ENCODE measurements at regions of chr4 and their contacts with region 1.

Region 1: GRCh38 chr4:56435306-56435926 is at the start of gene PPAT:
- DNase-seq: peak; percentile 97 to 100 (median 99)
- ATAC-seq: peak; percentile 91
- H3K4me3 ChIP-seq: peak within 1 kb of the TSS; percentile 93
- H3K4me3 Mint-ChIP-seq: peak within 1 kb of the TSS; percentile 81 to 99 (median 94)
- H3K27ac ChIP-seq: peak within 1 kb of the TSS; percentile 59
- H3K27ac Mint-ChIP-seq: peak within 1 kb of the TSS; percentile 78 to 98 (median 91)
- H3K4me1 ChIP-seq: peaks cover 12 to 15% of the 10 kb centered on the region in 2 donors
- H3K4me1 Mint-ChIP-seq: peaks cover 33 to 63% (median 47%) of the 10 kb centered on the region in 7 donors
- H3K27me3 ChIP-seq: no peaks in the 10 kb centered on the region
- H3K27me3 Mint-ChIP-seq: no peaks in the 10 kb centered on the region
- total RNA-seq, gene PPAT: 7.7 to 30.7 (median 15.3) TPM

Region 2: GRCh38 chr4:55853484-55854046 is 581.9 kb before region 1 on chr4 and contains the start of gene EXOC1:
- CTCF ChIA-PET with region 1: no interaction called
- POLR2A ChIA-PET with region 1: interaction called, 4 read pairs
- intact Hi-C with region 1: loop called (anchors 1 kb)
- DNase-seq: peak; percentile 93 to 98 (median 94)
- ATAC-seq: peak; percentile 99
- H3K4me3 ChIP-seq: peak within 1 kb of the TSS; percentile 84
- H3K4me3 Mint-ChIP-seq: peak within 1 kb of the TSS in 2 of 10 donors; percentile 34 to 69
- H3K27ac ChIP-seq: peak within 1 kb of the TSS; percentile 87
- H3K27ac Mint-ChIP-seq: peak within 1 kb of the TSS in 7 of 9 donors; percentile 75 to 94 (median 90)
- H3K4me1 ChIP-seq: peaks cover 26 to 31% of the 10 kb centered on the region in 2 donors
- H3K4me1 Mint-ChIP-seq: peaks cover 22 to 48% (median 42%) of the 10 kb centered on the region in 7 donors
- H3K27me3 ChIP-seq: no peaks in the 10 kb centered on the region
- H3K27me3 Mint-ChIP-seq: no peaks in the 10 kb centered on the region
- total RNA-seq, gene EXOC1: 20.3 to 46.7 (median 32.1) TPM

Region 3: GRCh38 chr4:56445699-56446098 is 10.3 kb after region 1 on chr4:
- CTCF ChIA-PET with region 1: no interaction called
- POLR2A ChIA-PET with region 1: interaction called, 7 read pairs
- intact Hi-C with region 1: loop called in 1 of 2 experiments (anchors 1 kb)
- DNase-seq: no peak
- ATAC-seq: no peak
- H3K4me3 ChIP-seq: no peak overlapping the region
- H3K4me3 Mint-ChIP-seq: no peak overlapping the region
- H3K27ac ChIP-seq: no peak overlapping the region
- H3K27ac Mint-ChIP-seq: no peak overlapping the region
- H3K4me1 ChIP-seq: peaks cover 0 to 3% of the 10 kb centered on the region in 2 donors
- H3K4me1 Mint-ChIP-seq: peaks cover 6 to 47% (median 18%) of the 10 kb centered on the region in 7 donors
- H3K27me3 ChIP-seq: no peaks in the 10 kb centered on the region
- H3K27me3 Mint-ChIP-seq: no peaks in the 10 kb centered on the region

Region 4: DNA sequence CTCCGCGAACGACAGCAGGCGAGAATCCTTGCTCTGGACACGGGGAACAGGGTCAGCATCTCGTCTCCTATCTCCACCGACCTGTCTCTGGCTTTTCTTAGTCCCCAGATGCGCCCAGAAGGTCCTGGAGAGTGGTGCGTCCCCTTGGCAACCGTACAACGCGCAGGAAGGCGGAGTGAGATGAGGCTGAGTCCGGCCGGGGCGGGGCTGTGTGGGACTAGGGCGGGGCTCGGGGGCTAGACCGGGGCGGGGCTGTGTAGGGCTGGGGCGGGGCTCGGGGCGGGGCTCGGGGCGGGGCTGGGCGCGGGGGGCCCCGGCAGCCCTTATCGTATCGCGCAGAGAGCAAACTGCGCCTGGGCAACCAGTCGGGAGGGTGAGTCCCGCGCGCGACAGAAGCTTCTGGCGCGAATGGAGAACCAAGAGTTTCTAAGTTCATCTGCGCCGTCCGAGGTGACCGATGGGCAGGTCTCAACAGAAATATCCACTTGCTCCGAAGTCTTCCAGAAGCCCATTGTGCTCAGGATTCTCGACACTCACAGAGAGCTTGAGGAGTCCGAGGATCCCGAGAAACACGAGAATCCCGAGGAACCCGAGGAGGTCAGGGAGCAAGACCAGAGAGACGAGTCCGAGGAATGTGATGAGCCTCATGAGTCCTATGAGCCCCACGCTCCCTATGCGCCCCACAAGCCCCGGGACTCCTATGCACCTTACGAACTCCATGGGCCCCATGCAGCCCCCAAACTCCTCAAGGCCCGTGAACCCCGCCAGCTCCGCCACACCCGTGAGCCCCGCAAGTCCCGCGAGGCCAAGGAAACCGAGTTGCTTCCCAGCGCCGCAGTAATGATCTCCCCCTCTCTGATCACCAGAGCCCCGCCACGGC is 95.1 kb after region 1 on chr4:
- CTCF ChIA-PET with region 1: no interaction called
- POLR2A ChIA-PET with region 1: interaction called, 6 read pairs
- intact Hi-C with region 1: loop called (anchors 1 kb)
- DNase-seq: peak; percentile 53 to 75 (median 59)
- ATAC-seq: peak; percentile 99
- H3K4me3 ChIP-seq: peak overlapping the region; percentile 91
- H3K4me3 Mint-ChIP-seq: peak overlapping the region in 1 of 10 donors; percentile 70
- H3K27ac ChIP-seq: peak overlapping the region; percentile 44
- H3K27ac Mint-ChIP-seq: peak overlapping the region in 3 of 9 donors; percentile 26 to 55 (median 38)
- H3K4me1 ChIP-seq: peaks cover 0 to 4% of the 10 kb centered on the region in 2 donors
- H3K4me1 Mint-ChIP-seq: peaks cover 0 to 2% (median 0%) of the 10 kb centered on the region in 7 donors
- H3K27me3 ChIP-seq: peaks cover 0 to 4% of the 10 kb centered on the region in 2 donors
- H3K27me3 Mint-ChIP-seq: peaks cover 0 to 22% (median 7%) of the 10 kb centered on the region in 5 donors

Region 5: GRCh38 chr4:56655209-56655626 is 219.8 kb after region 1 on chr4:
- CTCF ChIA-PET with region 1: no interaction called
- POLR2A ChIA-PET with region 1: no interaction called
- intact Hi-C with region 1: no loop called
- DNase-seq: peak in 4 of 9 donors; percentile 14 to 26 (median 22)
- ATAC-seq: peak; percentile 33
- H3K4me3 ChIP-seq: peak overlapping the region; percentile 66
- H3K4me3 Mint-ChIP-seq: peak overlapping the region; percentile 85 to 99 (median 90)
- H3K27ac ChIP-seq: no peak overlapping the region
- H3K27ac Mint-ChIP-seq: peak overlapping the region in 7 of 9 donors; percentile 2 to 82 (median 28)
- H3K4me1 ChIP-seq: peaks cover 16 to 36% of the 10 kb centered on the region in 2 donors
- H3K4me1 Mint-ChIP-seq: peaks cover 16 to 59% (median 34%) of the 10 kb centered on the region in 7 donors
- H3K27me3 ChIP-seq: peaks cover 0 to 3% of the 10 kb centered on the region in 2 donors
- H3K27me3 Mint-ChIP-seq: peaks cover 9 to 43% (median 33%) of the 10 kb centered on the region in 5 donors

Region 6: DNA sequence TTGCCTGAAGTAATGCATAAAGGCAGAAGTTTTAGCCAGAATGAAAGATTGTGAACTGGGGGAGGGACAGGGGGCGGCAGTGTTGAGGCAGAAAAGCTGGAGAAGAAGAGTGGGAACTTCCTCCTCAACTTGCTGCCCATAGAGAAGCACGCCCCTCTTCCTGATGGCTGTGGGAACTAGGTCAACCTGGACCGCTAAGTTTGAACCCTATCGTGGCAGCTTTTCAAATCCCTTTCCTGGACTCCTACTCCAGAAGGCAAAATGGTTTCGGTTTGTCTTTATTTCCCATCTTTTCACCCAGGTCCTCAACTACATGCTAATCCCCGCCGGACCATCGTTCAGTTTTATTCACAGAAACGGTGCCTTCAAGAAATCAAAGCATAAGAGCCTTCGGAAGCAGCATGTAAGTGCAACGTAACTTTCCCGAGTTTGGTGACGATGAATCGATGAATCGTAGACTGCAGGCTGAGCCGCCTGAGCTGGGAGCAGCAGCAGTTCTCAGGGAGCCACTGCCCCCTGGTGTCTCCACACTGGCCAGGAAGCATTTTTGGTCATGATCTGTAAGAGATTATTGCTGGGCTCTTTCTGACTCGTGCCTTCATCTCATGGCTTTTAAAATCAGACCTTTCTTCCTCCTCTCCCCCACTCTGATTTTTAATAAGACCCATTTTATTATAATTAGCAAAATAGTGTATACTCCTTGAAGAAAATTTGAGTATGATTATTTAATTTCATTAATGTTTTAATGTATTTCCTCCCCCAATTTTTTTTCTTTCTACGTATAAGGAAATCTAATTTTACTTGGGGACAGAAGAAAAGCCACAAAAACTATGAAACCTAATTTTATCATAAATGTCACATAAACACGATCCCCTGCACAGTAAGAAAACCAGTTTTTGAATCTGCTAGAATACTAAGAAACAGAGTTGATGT is 364.7 kb after region 1 on chr4:
- CTCF ChIA-PET with region 1: interaction called, 7 read pairs
- POLR2A ChIA-PET with region 1: interaction called, 4 read pairs
- intact Hi-C with region 1: loop called in 1 of 2 experiments (anchors 5 kb)
- DNase-seq: peak; percentile 57 to 88 (median 81)
- ATAC-seq: peak; percentile 99
- H3K4me3 ChIP-seq: peak overlapping the region; percentile 56
- H3K4me3 Mint-ChIP-seq: peak overlapping the region; percentile 91 to 100 (median 94)
- H3K27ac ChIP-seq: peak overlapping the region; percentile 72
- H3K27ac Mint-ChIP-seq: peak overlapping the region; percentile 40 to 96 (median 92)
- H3K4me1 ChIP-seq: peaks cover 0 to 2% of the 10 kb centered on the region in 2 donors
- H3K4me1 Mint-ChIP-seq: peaks cover 5 to 33% (median 22%) of the 10 kb centered on the region in 7 donors
- H3K27me3 ChIP-seq: no peaks in the 10 kb centered on the region
- H3K27me3 Mint-ChIP-seq: peaks cover 0 to 28% (median 0%) of the 10 kb centered on the region in 5 donors